Activated CD4-positive, alpha-beta memory T cell treated with anti-CD3 and anti-CD28 coated beads, Interleukin-2, amount 10 ng/mL, durations not matched to agents 7 days and 5 days (primary cell): ENCODE measurements at regions of chr13 and their contacts with region 1.

Region 1: DNA sequence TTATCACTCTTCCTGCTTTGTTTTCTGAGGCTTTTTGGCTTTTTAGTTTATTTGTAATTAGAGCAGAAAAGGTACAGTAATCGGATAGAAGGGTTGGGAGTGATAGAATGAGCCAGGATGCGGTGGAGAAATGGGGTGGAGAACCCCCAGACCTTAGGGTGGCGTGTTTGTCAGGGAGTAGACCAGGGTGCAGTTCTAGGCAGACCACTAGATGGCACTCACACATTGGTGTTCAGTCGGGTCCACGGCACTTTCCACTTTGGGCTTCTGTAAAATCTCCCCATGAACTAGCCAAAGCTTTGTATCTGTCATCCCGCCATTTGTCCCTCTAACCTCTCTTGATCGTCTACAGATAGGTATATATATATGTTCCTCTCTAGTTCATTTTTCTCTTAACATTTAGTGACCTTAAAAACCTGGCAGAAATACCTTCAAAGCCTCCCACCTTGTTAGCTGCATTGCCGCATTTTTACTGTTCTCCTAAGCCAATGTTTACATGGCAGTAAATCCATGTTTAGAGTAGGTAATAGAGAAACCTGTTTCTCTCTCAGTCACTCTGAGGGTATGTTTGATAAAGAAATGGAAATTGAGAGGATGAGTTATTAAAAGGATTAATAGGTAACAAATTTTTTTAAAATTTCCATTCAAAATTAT is 154.9 kb downstream of the TM9SF2 start:
- DNase-seq: peak; percentile 86
- H3K4me3 Mint-ChIP-seq: peak overlapping the region; percentile 59
- H3K27ac Mint-ChIP-seq: peak overlapping the region; percentile 81
- H3K4me1 Mint-ChIP-seq: peaks cover 42% of the 10 kb centered on the region
- H3K27me3 Mint-ChIP-seq: peaks cover 9% of the 10 kb centered on the region

Region 2: DNA sequence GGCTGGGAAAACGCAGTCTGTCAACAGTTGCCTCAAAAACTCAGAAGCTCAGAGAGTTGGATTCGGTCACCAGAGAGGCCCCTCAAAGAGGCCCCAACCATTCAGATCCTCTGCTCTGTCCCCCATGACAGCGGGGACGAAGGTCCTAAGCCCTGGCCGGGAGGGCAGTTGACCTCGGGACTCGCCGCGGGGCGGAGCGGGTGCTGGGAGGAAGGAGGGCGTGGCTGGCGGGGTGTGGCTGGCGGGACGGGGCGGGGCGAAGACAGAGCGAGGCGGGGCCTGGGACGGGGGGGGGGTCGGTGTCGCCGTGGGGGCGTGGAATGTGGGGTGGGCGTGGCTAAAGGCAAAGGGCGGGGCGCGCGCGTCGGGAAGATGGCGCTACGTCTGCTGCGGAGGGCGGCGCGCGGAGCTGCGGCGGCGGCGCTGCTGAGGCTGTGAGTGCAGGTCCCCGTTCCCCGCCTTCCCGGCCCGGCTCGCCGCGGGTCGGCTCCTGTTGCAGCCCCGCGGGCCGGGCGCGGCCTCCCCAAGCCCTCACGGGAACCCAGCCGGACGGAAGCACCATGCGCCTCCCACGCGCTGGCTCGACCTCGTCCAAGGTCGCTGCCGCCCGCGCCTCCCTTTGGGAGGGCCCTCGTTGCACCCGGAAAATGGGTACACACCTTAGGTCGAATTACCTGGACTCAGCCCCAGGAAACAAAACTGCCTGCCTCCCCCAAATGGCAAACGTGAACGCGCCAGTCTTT is 49.7 kb before region 1 on chr13:
- CTCF ChIA-PET with region 1: interaction called, 4 read pairs
- POLR2A ChIA-PET with region 1: interaction called, 11 read pairs
- DNase-seq: peak; percentile 91
- H3K4me3 Mint-ChIP-seq: peak within 1 kb of the TSS; percentile 72
- H3K27ac Mint-ChIP-seq: peak within 1 kb of the TSS; percentile 79
- H3K4me1 Mint-ChIP-seq: peaks cover 31% of the 10 kb centered on the region
- H3K27me3 Mint-ChIP-seq: no peaks in the 10 kb centered on the region

Region 3: GRCh38 chr13:99911069-99911964 is 255.1 kb after region 1 on chr13:
- CTCF ChIA-PET with region 1: interaction called, 23 read pairs
- POLR2A ChIA-PET with region 1: interaction called, 4 read pairs
- DNase-seq: no peak
- H3K4me3 Mint-ChIP-seq: peak overlapping the region; percentile 14
- H3K27ac Mint-ChIP-seq: peak overlapping the region; percentile 87
- H3K4me1 Mint-ChIP-seq: peaks cover 47% of the 10 kb centered on the region
- H3K27me3 Mint-ChIP-seq: peaks cover 2% of the 10 kb centered on the region

Region 4: DNA sequence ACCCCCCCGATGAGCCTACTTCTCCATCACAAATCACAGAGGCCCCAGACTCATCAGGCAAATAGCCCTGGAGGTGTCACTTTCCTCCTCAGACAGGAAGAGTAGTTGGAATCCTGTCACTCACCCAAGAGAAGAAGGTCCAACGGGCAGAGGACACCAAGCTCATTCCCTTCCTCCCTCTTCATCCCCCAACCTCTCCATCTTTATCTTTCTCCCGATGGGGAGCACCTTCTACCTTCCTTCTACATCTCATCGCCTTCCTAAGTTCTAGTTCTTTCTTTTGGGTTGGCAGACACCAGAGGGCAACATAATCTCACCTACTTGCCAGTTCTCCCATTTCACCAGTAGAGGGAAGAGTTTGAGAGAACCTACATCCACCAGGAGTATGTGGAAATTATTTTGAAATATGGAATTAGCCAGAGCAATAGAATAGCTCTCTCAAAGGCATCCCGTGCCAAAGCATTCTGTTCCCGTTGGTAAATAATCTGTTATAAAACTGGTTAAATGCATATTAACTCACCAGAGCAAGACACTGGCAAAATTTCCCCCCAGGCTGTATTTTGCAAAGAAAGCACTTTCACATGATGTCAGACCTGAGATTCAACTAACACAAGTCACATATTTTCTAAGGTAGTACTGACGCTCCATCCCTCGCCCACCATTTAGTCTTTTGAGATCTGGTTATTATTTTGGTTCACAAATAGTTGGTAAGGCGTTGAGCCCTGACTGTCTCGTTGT is 260.3 kb after region 1 on chr13:
- CTCF ChIA-PET with region 1: interaction called, 23 read pairs
- POLR2A ChIA-PET with region 1: interaction called, 4 read pairs
- DNase-seq: peak; percentile 20
- H3K4me3 Mint-ChIP-seq: no peak overlapping the region
- H3K27ac Mint-ChIP-seq: no peak overlapping the region
- H3K4me1 Mint-ChIP-seq: peaks cover 37% of the 10 kb centered on the region
- H3K27me3 Mint-ChIP-seq: peaks cover 14% of the 10 kb centered on the region

Region 5: DNA sequence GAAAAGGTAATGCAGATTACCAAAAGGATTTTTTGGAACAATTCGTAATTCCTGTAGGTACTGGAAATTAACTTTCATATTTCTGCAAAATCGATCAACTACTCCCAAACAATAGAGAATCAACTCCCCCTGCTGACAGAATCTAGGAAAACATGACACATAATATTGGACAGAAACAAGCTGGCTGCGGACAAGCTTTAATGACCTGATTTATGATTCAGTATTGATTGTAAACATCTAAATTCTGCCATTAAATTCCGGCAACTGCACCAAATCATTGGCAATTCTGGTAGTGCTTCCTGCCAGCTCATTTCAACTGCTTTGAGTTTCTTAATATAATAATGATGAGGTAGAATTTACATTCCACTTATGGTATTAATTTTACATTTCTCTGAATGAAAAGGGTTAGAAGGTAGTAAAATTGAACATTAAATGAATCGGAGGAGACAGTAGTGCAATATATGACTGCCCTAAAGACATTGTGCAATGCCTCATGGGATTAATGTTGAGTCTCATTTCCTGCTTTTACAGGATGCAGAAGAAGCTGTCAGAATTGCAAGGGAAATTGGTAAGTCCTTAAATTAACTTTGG is 579.2 kb after region 1 on chr13:
- CTCF ChIA-PET with region 1: interaction called, 31 read pairs
- POLR2A ChIA-PET with region 1: interaction called, 4 read pairs
- DNase-seq: no peak
- H3K4me3 Mint-ChIP-seq: no peak overlapping the region
- H3K27ac Mint-ChIP-seq: no peak overlapping the region
- H3K4me1 Mint-ChIP-seq: peaks cover 8% of the 10 kb centered on the region
- H3K27me3 Mint-ChIP-seq: no peaks in the 10 kb centered on the region

Region 6: DNA sequence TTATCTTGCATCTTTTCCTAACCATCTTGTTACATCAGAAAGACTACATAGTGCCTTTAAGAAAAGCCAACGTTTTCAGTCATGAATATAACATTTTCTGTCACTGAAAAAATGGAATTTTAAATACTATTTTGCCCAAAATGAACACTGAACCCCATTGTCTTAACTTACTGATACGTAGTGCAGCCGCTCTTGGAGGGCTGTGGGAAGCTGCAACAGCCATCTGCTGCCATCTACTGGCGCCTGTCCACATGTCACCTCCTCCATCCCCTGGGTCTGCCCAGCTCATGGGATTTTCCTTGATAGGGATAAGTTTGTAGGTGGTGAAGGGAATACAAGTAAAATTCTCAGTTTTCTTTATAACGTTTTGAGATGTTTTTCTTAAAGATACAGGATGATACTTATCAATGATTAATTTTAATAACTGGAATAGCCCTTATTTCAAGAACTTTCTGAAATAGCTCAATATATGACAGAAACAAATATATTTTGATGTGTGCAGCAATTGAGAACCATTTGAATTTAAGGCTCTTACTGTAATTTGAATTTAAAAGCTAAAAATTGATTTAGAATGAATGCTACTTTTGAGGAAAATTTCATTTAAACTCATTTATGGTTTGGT is 858.7 kb after region 1 on chr13:
- CTCF ChIA-PET with region 1: interaction called, 39 read pairs
- POLR2A ChIA-PET with region 1: interaction called, 3 read pairs
- DNase-seq: peak; percentile 79
- H3K4me3 Mint-ChIP-seq: no peak overlapping the region
- H3K27ac Mint-ChIP-seq: no peak overlapping the region
- H3K4me1 Mint-ChIP-seq: peaks cover 27% of the 10 kb centered on the region
- H3K27me3 Mint-ChIP-seq: peaks cover 14% of the 10 kb centered on the region